GM12878 (cell line): ENCODE measurements at regions of chr1 and their contacts with region 1.

Region 1: GRCh38 chr1:27392096-27392777 is at the start of gene GPR3:
- DNase-seq: no peak
- ATAC-seq: peak; percentile 89
- H3K4me3 ChIP-seq: peak within 1 kb of the TSS; percentile 71
- H3K27ac ChIP-seq: no peak within 1 kb of the TSS
- H3K4me1 ChIP-seq: peaks cover 8% of the 10 kb centered on the region
- H3K27me3 ChIP-seq: no peaks in the 10 kb centered on the region
- CTCF ChIP-seq: peak; percentile 47 to 61 (median 52)
- EP300 ChIP-seq: no peak
- POLR2A ChIP-seq: no peak
- RAD21 ChIP-seq: peak; percentile 31
- polyA plus RNA-seq, gene GPR3: not detected

Region 2: DNA sequence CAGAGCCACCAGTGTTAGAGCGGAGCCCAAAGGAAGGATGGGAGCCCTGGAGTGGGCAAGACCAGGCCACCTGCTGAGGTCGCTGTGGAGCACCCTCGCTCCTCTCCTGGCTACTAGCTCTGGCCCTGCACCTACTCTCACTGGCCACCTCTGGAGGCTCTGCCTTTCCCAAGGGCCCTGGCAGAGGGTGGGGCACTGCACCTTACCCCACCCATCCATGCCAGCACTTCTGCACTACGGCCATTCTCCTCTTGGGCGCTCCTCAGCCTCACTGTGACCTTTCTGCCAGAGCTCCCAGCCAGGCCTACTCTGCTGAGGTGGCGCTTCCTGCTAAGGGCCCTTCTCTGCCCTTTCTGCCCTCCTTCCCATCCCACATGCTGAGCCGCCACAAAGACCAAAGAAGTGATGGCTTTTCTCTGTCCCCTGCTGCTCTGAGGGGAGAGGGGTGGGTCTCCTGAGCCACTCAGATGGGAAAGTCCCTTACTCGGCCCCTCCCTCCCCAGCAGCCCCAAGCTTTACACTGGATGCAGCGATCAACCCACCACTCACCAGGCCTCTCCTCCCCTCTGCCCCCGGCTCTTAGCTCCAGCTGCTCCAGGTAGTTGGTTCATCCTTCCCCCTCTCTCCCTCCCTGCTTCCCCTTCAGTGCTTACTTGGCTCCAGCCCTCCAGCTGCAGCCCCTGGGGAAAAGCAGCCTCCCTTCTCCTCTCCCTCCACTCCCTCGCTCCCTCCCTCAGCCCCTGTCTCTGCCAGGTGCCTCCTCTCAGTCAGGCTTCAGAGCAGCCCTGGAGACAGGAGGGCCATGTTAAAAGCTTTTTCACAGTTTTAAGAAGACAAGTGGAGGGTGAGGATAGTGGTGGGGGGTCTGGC is 85.1 kb before region 1 on chr1:
- CTCF ChIA-PET with region 1: interaction called, 265 read pairs
- POLR2A ChIA-PET with region 1: no interaction called
- RAD21 ChIA-PET with region 1: interaction called, 103 read pairs
- SMC1A ChIA-PET with region 1: interaction called, 54 read pairs
- in situ Hi-C with region 1: loop called (anchors 5 kb)
- intact Hi-C with region 1: no loop called
- DNase-seq: no peak
- ATAC-seq: peak; percentile 36
- H3K4me3 ChIP-seq: no peak overlapping the region
- H3K27ac ChIP-seq: no peak overlapping the region
- H3K4me1 ChIP-seq: no peaks in the 10 kb centered on the region
- H3K27me3 ChIP-seq: no peaks in the 10 kb centered on the region
- CTCF ChIP-seq: 0 out of 6 replicates have a peak, but pooled peaks of 1 of the 3 experiments have one; percentile 7
- EP300 ChIP-seq: no peak
- POLR2A ChIP-seq: no peak
- RAD21 ChIP-seq: no peak

Region 3: DNA sequence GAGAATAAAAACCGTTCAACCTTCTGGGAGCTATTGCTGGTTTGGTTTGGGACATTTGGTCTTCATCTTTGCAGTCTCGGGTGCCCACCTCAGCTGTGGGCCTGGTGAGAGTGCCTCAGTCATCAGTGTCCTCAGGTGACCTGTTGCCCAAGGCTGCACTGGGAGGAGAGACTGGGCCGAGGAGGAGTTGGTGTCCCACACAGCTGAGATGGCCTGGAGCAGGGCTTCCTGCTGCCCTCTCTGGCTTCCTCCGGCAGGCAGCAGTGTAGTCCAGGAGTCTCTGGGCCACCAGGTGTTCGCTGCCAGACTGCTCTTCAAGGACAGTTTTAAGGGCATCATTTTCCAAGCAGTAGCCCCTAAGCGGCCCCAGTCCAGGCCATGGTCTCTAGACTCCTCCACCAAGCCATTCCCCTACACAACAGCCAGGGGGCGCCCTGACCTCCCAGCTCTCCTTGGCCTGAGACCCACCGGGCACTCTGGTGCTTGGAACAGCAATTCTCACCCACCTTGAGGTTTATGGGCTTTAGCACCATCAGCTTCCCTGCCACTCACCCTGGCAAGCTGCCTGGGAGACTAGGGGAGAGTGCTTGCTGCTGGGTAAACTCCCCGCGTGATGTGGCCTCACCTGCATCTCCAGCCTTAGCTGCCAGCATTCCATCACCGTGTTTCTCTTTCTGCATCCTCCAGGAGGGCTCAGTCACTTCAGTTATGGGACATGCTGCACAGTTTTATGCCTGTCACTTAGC is 59.5 kb before region 1 on chr1:
- CTCF ChIA-PET with region 1: interaction called, 77 read pairs
- POLR2A ChIA-PET with region 1: interaction called, 6 read pairs
- RAD21 ChIA-PET with region 1: interaction called, 18 read pairs
- SMC1A ChIA-PET with region 1: interaction called, 10 read pairs
- in situ Hi-C with region 1: no loop called
- intact Hi-C with region 1: no loop called
- DNase-seq: no peak
- ATAC-seq: peak; percentile 95
- H3K4me3 ChIP-seq: no peak overlapping the region
- H3K27ac ChIP-seq: no peak overlapping the region
- H3K4me1 ChIP-seq: no peaks in the 10 kb centered on the region
- H3K27me3 ChIP-seq: no peaks in the 10 kb centered on the region
- CTCF ChIP-seq: peak; percentile 63 to 88 (median 86)
- EP300 ChIP-seq: no peak
- POLR2A ChIP-seq: 0 out of 2 replicates have a peak, but pooled peaks have one; percentile 25
- RAD21 ChIP-seq: peak; percentile 57; the same call in 1 of the 2 replicates

Region 4: DNA sequence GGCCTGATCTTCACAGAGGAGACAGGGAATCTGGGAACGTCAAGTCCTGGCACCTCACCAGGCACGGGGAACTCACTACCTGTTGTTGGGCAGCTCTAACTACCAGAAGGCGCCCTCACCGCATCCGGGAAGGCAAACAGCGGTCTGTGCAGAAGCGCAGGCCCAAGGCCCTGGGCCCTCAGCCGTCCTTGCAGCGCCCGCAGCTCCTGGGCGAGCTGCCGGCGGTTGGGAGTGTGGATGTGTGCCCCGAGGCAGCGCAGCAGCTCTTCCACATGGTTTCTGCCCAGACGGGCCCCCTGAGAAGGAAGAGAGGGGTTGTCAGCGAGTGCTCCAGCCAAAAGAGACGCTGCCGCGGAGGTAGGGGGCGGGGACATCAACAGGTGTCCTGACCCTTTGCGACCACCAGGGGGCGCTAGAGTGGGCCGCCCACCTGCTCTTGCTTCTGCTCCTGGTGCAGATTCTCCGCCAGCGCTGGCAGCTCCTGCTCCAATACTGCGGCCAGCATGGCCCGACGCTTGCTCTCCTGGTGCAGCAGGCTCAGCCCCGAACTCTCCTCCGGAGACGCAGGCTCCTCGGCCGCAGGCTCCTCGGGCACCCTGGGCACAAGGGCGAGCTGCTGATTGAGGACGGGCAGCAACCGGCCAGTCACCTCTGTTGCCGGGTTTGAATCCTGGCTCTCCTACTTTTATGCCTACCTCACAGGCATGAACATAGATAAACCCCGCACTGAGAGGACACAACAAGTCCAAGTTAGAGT is 34.8 kb before region 1 on chr1:
- CTCF ChIA-PET with region 1: interaction called, 126 read pairs
- POLR2A ChIA-PET with region 1: no interaction called
- RAD21 ChIA-PET with region 1: interaction called, 16 read pairs
- SMC1A ChIA-PET with region 1: interaction called, 16 read pairs
- in situ Hi-C with region 1: no loop called
- intact Hi-C with region 1: loop called (anchors 1 kb)
- DNase-seq: no peak
- ATAC-seq: peak; percentile 88
- H3K4me3 ChIP-seq: peak overlapping the region; percentile 54; the same call in 1 of the 2 replicates
- H3K27ac ChIP-seq: no peak overlapping the region
- H3K4me1 ChIP-seq: peaks cover 13% of the 10 kb centered on the region
- H3K27me3 ChIP-seq: no peaks in the 10 kb centered on the region; a peak in 1 of 4 replicates
- CTCF ChIP-seq: peak; percentile 90 to 96 (median 93); a peak in 5 of 6 replicates
- EP300 ChIP-seq: no peak
- POLR2A ChIP-seq: no peak
- RAD21 ChIP-seq: peak; percentile 49

Region 5: DNA sequence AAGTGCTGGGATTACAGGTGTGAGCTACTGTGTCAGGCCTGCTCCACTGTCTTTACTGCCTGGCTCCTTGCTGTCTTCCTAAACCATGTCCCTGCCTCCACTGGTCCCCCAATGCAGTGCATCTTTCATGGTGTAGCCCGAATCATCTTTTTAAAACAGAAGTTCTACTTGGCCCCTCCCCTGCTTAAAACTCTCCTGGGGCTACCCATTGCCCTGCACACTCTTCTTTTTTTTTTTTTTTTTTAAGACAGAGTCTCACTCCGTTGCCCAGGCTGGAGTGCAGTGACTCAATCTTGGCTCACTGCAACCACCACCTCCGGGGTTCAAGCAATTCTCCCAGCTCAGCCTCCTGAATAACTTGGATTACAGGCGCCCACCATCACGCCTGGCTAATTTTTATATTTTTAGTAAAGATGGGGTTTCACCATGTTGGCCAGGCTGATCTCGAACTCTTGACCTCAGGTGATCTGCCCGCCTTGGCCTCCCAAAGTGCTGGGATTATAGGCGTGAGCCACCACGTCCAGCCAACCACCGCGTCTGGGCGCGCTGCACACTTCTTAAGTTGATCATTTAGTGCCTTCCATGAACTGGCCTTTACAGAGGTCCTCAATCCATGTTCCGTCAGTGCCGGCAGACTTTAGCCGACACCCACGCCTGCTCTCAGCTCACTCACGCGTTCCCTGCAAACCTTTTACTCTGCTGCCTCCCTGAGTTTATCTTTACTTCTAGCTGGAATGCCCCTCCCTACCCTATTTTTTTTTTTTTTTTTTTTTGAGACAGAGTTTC is 20.0 kb before region 1 on chr1:
- CTCF ChIA-PET with region 1: interaction called, 35 read pairs
- POLR2A ChIA-PET with region 1: interaction called, 3 read pairs
- RAD21 ChIA-PET with region 1: interaction called, 3 read pairs
- SMC1A ChIA-PET with region 1: interaction called, 27 read pairs
- in situ Hi-C with region 1: no loop called
- intact Hi-C with region 1: no loop called
- DNase-seq: no peak
- ATAC-seq: no peak
- H3K4me3 ChIP-seq: no peak overlapping the region
- H3K27ac ChIP-seq: no peak overlapping the region
- H3K4me1 ChIP-seq: peaks cover 10% of the 10 kb centered on the region
- H3K27me3 ChIP-seq: no peaks in the 10 kb centered on the region; a peak in 1 of 4 replicates
- CTCF ChIP-seq: no peak
- EP300 ChIP-seq: no peak
- POLR2A ChIP-seq: no peak
- RAD21 ChIP-seq: no peak

Region 6: DNA sequence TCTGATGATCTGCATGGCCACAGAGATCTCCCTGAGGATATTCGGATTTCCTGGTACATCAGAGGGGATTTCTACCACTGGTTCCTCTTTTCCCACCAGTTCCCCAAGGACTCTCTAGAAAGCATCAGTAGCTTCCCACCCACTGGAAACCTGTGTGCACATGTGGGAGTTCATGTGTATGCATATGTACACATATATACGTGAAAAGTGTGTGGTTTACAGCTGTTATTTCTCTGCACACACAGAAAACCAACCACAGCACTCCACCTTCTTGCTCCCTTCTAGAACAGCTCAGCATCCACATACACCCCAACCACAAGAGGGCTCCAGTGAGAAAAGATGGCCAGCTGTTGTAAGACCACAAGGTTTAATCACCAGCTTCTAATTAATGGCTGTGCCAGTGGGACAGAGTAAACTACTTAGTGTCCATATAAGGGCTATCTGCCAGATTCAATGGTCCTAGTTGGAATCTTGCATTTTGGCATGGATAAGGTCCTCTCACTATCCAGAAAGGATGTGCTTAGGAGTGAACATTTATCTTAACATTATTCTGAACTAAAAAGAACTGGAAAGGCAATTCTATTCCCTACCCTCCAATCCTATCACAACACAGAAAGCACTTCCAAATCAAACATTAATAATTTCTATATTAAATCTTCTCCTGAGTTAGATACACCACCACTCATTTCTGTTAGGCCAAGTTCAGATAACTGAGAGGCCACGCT is 24.3 kb after region 1 on chr1:
- CTCF ChIA-PET with region 1: interaction called, 37 read pairs
- POLR2A ChIA-PET with region 1: interaction called, 5 read pairs
- RAD21 ChIA-PET with region 1: interaction called, 3 read pairs
- SMC1A ChIA-PET with region 1: interaction called, 5 read pairs
- in situ Hi-C with region 1: no loop called
- intact Hi-C with region 1: no loop called
- DNase-seq: peak; percentile 70
- ATAC-seq: peak; percentile 73
- H3K4me3 ChIP-seq: no peak overlapping the region
- H3K27ac ChIP-seq: peak overlapping the region; percentile 74
- H3K4me1 ChIP-seq: peaks cover 36% of the 10 kb centered on the region
- H3K27me3 ChIP-seq: no peaks in the 10 kb centered on the region
- CTCF ChIP-seq: peak; percentile 74 to 82 (median 74)
- EP300 ChIP-seq: 0 out of 4 replicates have a peak, but pooled peaks of 1 of the 2 experiments have one; percentile 26
- POLR2A ChIP-seq: no peak
- RAD21 ChIP-seq: peak; percentile 87